ENCODE measurements at regions of chr16 and their contacts with region 1.

Region 1: DNA sequence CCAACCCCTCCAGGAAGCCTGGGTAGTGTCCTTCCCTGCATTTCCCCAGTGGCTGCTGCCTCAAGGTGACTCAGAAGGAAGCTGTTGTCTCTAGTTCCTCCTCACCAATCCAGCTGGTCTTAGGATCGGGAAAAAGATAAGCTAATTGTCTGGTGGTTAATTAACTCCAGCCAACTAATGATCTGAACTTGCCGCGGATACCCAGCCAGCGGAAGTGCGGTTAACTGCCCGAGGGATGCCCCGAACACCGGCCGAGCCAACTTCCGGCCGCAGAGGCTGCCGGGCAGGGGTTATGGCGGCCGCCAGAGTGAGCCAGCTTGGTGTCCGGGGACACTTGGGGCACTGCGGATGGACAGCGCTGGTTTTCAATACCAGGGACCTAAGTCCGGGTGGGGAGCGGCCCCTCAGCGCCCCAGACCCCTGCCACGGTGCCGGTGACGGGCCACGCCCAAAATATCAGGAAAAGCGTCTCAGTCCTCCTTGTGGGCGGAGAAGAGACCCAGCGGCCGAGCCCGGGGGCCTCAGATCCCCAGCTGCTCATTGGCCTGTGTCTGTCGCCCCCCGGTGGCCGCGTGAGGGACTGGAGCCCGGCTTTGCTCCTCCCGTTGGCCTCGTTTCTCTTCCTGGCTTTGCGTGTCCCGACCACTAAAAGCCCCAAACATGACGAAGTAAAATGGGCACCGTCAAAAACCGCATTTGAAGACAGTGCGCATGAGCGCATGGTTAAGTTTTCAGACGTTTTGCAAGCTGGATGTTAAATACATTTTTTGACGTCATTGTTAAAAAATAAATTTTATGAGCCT is 10.2 kb upstream of the PRSS22 start:
- DNase-seq: peak; percentile 99
- ATAC-seq: peak; percentile 96
- H3K4me3 Mint-ChIP-seq: peak overlapping the region; percentile 89
- H3K27ac Mint-ChIP-seq: peak overlapping the region; percentile 95
- H3K4me1 Mint-ChIP-seq: peaks cover 9% of the 10 kb centered on the region
- H3K27me3 Mint-ChIP-seq: no peaks in the 10 kb centered on the region
- CTCF ChIP-seq: peak; percentile 98

Region 2: GRCh38 chr16:2784951-2785635 is 83.1 kb before region 1 on chr16:
- CTCF ChIA-PET with region 1: interaction called, 14 read pairs
- POLR2A ChIA-PET with region 1: interaction called, 5 read pairs
- intact Hi-C with region 1: no loop called
- DNase-seq: peak; percentile 61
- ATAC-seq: peak; percentile 65
- H3K4me3 Mint-ChIP-seq: peak overlapping the region; percentile 84
- H3K27ac Mint-ChIP-seq: peak overlapping the region; percentile 87
- H3K4me1 Mint-ChIP-seq: peaks cover 11% of the 10 kb centered on the region
- H3K27me3 Mint-ChIP-seq: peaks cover 2% of the 10 kb centered on the region
- CTCF ChIP-seq: no peak

Region 3: GRCh38 chr16:2825049-2825742 is 43.0 kb before region 1 on chr16:
- CTCF ChIA-PET with region 1: no interaction called
- POLR2A ChIA-PET with region 1: no interaction called
- intact Hi-C with region 1: no loop called
- DNase-seq: no peak
- ATAC-seq: no peak
- H3K4me3 Mint-ChIP-seq: no peak overlapping the region
- H3K27ac Mint-ChIP-seq: no peak overlapping the region
- H3K4me1 Mint-ChIP-seq: no peaks in the 10 kb centered on the region
- H3K27me3 Mint-ChIP-seq: no peaks in the 10 kb centered on the region
- CTCF ChIP-seq: no peak

Region 4: GRCh38 chr16:2854700-2855309 is 13.4 kb before region 1 on chr16:
- CTCF ChIA-PET with region 1: interaction called, 20 read pairs
- POLR2A ChIA-PET with region 1: no interaction called
- intact Hi-C with region 1: no loop called
- DNase-seq: peak; percentile 29
- ATAC-seq: no peak
- H3K4me3 Mint-ChIP-seq: no peak overlapping the region
- H3K27ac Mint-ChIP-seq: no peak overlapping the region
- H3K4me1 Mint-ChIP-seq: peaks cover 4% of the 10 kb centered on the region
- H3K27me3 Mint-ChIP-seq: peaks cover 6% of the 10 kb centered on the region
- CTCF ChIP-seq: peak; percentile 86

Region 5: GRCh38 chr16:2905431-2906387 is 37.5 kb after region 1 on chr16:
- CTCF ChIA-PET with region 1: interaction called, 12 read pairs
- POLR2A ChIA-PET with region 1: no interaction called
- intact Hi-C with region 1: no loop called
- DNase-seq: peak; percentile 100
- ATAC-seq: peak; percentile 87
- H3K4me3 Mint-ChIP-seq: peak overlapping the region; percentile 95
- H3K27ac Mint-ChIP-seq: peak overlapping the region; percentile 80
- H3K4me1 Mint-ChIP-seq: peaks cover 20% of the 10 kb centered on the region
- H3K27me3 Mint-ChIP-seq: no peaks in the 10 kb centered on the region
- CTCF ChIP-seq: no peak

Region 6: GRCh38 chr16:2919511-2920255 is 51.5 kb after region 1 on chr16:
- CTCF ChIA-PET with region 1: interaction called, 61 read pairs
- POLR2A ChIA-PET with region 1: interaction called, 4 read pairs
- intact Hi-C with region 1: no loop called
- DNase-seq: peak; percentile 80
- ATAC-seq: peak; percentile 88
- H3K4me3 Mint-ChIP-seq: no peak overlapping the region
- H3K27ac Mint-ChIP-seq: no peak overlapping the region
- H3K4me1 Mint-ChIP-seq: peaks cover 9% of the 10 kb centered on the region
- H3K27me3 Mint-ChIP-seq: no peaks in the 10 kb centered on the region
- CTCF ChIP-seq: peak; percentile 97